Calu3 (cell line): ENCODE measurements at regions of chr5 and their contacts with region 1.

Region 1: DNA sequence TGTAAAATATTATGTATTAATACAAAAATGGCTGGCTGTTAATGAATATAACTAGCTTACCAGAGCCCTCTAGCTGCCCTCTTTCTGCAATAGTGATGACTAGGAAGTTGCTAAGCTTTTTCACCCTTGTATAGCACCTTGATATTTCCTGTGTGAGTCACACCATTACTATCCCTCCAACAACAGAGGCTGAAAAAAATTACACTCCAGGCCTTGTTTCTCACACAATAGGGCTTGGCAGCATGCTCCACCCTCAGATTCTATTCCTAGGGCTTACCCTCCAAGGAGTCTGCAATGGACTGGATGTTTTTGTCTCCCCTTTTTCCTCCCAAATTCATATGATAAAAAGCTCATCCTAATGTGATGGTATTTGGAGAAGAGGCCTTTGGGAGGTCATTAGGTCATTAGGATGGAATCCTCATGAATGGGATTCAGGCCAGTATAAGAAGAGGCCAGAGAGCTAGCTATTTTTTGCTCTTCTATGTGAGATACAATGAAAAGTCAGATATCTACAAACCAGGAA is 184.6 kb upstream of the MAP1B start:
- DNase-seq: peak; percentile 66
- H3K4me3 Mint-ChIP-seq: peak overlapping the region; percentile 31
- H3K27ac Mint-ChIP-seq: peak overlapping the region; percentile 96
- H3K4me1 Mint-ChIP-seq: peaks cover 44% of the 10 kb centered on the region
- H3K27me3 Mint-ChIP-seq: no peaks in the 10 kb centered on the region
- CTCF ChIP-seq: no peak

Region 2: DNA sequence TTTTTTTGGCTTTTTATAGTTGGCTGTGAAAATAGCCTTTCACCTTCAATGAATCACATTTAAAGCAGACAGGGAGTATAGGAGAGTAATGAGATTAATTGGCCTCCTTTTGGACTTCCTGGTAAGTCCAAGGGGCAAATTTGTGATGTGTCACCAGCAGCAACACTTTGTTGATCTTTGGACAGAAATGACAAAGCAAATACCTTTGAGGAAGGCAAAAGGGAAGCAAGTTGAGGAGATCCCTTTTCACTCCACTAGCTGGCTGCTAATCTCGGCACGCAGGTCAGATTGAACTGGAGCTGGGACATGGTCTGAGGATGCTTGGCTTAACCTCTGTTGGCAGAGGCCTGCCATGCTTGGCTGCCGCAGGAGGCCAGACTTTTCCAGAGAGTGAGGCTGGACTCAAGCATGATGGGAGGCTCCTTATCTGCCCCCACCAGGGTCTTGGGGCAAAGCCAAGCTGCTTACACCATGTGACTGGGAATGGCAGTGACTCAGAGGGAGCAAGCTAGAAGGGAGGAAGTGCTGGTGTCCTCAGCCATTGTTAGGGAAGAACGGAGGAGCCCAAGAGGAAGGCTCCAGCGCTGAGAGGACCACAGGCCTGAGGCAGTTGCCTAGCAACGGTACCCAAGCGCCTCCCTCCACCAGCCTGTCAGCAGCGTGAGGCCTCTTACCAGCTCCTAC is 10.2 kb after region 1 on chr5:
- CTCF ChIA-PET with region 1: interaction called, 17 read pairs
- intact Hi-C with region 1: no loop called
- DNase-seq: peak; percentile 83
- H3K4me3 Mint-ChIP-seq: peak overlapping the region; percentile 28
- H3K27ac Mint-ChIP-seq: peak overlapping the region; percentile 93
- H3K4me1 Mint-ChIP-seq: peaks cover 23% of the 10 kb centered on the region
- H3K27me3 Mint-ChIP-seq: no peaks in the 10 kb centered on the region
- CTCF ChIP-seq: no peak

Region 3: GRCh38 chr5:72005671-72006070 is 83.0 kb after region 1 on chr5:
- CTCF ChIA-PET with region 1: no interaction called
- intact Hi-C with region 1: loop called (anchors 5 kb)
- DNase-seq: peak; percentile 6
- H3K4me3 Mint-ChIP-seq: no peak overlapping the region
- H3K27ac Mint-ChIP-seq: no peak overlapping the region
- H3K4me1 Mint-ChIP-seq: peaks cover 29% of the 10 kb centered on the region
- H3K27me3 Mint-ChIP-seq: no peaks in the 10 kb centered on the region
- CTCF ChIP-seq: no peak

Region 4: DNA sequence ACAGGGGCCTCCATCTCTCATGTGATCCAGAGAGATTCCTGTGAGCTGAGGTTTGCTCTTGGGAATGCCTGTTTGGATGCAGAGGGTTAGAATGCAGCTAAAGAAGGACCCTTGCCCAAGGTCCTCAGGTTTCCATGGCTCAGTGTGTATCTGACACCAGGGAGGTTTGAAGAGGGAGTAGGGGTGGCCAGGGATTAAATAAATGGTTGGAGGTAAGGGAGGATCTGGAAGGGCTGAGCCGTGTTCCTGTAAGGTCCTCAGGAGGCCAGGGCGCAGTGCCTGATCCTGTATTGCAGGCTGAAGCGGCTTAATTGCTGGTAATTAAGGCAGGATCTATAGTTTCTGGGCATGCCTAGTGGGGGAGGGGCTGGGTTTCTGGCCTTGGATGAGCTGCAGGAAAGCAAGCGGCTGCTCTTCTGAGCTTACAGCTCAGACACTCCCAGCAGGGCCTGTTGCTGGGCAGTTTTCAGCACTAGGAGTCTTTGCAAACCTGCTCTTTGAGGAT is 143.2 kb after region 1 on chr5:
- CTCF ChIA-PET with region 1: interaction called, 10 read pairs
- intact Hi-C with region 1: no loop called
- DNase-seq: no peak
- H3K4me3 Mint-ChIP-seq: no peak overlapping the region
- H3K27ac Mint-ChIP-seq: no peak overlapping the region
- H3K4me1 Mint-ChIP-seq: peaks cover 39% of the 10 kb centered on the region
- H3K27me3 Mint-ChIP-seq: no peaks in the 10 kb centered on the region
- CTCF ChIP-seq: no peak